Dorsolateral prefrontal cortex (tissue), 120 donors: ENCODE measurements at regions of chr14 and their contacts with region 1.

Region 1: DNA sequence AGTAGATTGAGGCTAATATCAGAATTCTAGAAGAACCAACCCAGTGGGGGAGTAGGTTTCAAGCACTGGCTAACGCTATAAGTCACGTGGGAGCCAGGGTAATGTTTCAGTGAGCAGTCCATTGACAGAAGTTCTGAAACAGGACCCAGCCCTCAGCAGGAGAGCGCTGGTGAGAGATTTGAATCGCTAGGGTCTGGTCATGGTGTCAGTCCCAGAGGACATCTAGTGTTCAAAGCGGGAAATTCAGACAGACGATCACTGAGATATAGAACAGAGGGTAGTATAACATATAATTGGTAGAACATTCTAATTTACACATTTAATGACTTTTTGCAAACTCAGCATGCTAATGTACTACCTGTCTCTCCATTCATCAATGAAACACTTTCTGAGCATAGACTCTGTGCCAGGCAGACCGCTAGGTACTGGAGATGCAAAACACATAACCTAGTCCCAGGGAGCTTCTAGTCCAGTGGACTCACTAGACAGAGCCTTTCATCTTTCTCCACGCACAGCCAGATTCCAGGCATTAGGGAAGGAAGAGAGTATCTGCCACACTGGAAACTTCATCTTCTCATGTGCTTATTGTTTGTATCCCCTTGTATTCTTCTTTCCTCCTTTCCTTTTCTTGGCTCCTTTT is 35.4 kb upstream of the RNASE3 start:
- DNase-seq: peak in 9 of 10 donors; percentile 17 to 76 (median 58)
- H3K4me3 ChIP-seq: no peak overlapping the region
- H3K27ac ChIP-seq: peak overlapping the region in 2 of 59 donors; percentile 36 to 45
- H3K27me3 ChIP-seq: peaks cover 0 to 14% (median 0%) of the 10 kb centered on the region in 45 donors
- CTCF ChIP-seq: peak; percentile 65 to 97 (median 89)

Region 2: DNA sequence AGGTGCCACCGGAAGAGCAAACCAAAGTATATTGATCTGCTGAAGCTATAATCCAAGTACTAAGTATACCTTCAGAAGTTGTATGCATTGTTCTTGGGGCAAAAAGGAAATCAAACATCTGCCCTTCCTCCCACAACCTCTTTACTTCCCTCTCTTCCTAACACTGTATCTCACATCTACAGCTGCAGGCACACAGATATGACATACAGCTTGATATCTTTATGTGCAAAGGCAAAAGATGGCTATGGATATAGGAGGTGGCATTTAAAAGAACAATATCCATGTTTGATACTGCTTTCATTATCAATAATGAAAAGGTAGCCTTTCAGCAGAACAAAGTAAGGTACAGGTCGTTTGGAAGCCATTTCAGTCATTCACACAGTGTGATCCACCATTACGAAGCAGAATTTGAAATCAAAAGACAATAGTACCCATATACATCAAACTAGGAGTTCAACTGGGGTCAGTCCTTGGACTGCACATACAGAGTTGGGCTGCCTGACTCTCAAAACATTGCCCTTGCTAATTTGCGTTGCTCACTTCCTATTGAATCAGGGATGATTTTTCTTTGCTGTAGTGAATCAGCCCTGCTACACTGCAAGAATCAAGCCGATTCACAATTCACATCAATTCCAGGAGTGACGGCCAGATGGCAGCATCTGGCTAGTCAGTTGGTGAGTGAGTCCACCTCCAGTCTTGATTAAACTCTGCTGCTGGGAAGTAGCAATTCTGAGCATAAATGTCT is 158.3 kb before region 1 on chr14:
- intact Hi-C with region 1: loop called (anchors 1 to 2 kb)
- DNase-seq: peak in 9 of 10 donors; percentile 55 to 86 (median 74)
- H3K4me3 ChIP-seq: peak overlapping the region in 1 of 59 donors; percentile 16
- H3K27ac ChIP-seq: peak overlapping the region in 8 of 59 donors; percentile 5 to 57 (median 26)
- H3K27me3 ChIP-seq: no peaks in the 10 kb centered on the region
- CTCF ChIP-seq: peak; percentile 66 to 97 (median 87)

Region 3: DNA sequence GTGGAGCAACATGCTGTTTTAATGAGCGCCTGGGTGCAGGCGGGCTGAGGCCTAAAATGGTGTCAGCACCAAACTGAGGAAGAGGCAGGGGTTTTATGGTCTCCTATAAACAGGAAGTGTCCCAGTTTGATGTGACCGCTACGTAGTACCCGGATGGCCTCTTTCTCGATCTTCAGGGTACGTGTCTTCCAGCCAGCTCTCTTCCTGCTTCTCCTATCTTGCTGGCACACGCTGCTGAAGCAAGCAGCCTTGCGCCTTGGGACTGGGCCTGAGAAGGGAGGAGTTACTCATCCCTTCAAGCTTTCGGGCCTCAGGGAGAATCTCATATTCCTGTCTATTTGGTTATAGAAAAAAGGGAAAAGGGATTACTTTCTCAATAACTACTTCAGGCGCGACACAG is 24.9 kb before region 1 on chr14:
- intact Hi-C with region 1: no loop called
- DNase-seq: no peak
- H3K4me3 ChIP-seq: no peak overlapping the region
- H3K27ac ChIP-seq: no peak overlapping the region
- H3K27me3 ChIP-seq: peaks cover 0 to 6% (median 0%) of the 10 kb centered on the region in 45 donors
- CTCF ChIP-seq: no peak

Region 4: DNA sequence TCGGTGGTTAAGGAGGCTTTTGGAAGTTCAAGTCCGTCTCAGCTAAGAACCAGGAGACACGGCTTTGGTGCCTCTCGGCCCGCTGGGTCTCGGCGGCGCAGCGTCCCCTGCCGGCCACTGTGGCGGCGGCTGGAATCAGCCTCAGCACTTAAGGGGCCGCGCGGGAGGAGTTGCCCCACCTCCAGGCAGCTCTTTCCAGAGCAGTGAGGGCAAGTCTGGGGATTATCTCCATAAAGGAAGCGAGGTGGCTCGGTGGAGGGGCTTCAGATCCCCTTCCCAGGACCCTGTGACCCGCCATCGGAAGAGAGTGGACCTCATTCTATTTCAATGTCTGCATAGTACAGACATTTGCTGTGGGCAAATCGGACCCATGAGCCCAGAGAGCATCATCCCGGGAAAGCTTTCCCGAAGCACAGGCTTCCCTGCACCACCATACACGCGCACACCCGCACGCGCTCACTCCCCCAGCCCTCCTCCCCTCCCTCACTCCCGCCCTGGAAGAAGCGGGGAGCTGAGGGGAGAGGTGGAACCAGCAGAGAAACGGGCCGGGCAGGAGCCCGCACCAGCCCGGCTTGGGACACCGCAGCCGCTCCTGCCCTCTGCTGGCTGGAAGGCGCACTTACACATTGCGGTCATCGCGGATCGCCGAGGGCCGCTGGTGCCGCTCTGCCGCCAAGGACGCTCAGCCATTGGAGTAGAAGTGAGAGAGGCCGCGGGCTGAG is 115.4 kb after region 1 on chr14:
- intact Hi-C with region 1: loop called (anchors 5 kb)
- DNase-seq: peak; percentile 66 to 89 (median 76)
- H3K4me3 ChIP-seq: peak overlapping the region; percentile 54 to 97 (median 70)
- H3K27ac ChIP-seq: peak overlapping the region in 55 of 59 donors; percentile 10 to 88 (median 68)
- H3K27me3 ChIP-seq: peaks cover 0 to 20% (median 0%) of the 10 kb centered on the region in 45 donors
- CTCF ChIP-seq: peak; percentile 52 to 88 (median 78)

Region 5: GRCh38 chr14:20982646-20983369 is 127.0 kb after region 1 on chr14:
- intact Hi-C with region 1: no loop called
- DNase-seq: no peak
- H3K4me3 ChIP-seq: no peak overlapping the region
- H3K27ac ChIP-seq: no peak overlapping the region
- H3K27me3 ChIP-seq: peaks cover 0 to 6% (median 0%) of the 10 kb centered on the region in 45 donors
- CTCF ChIP-seq: no peak

Region 6: GRCh38 chr14:21092273-21093011 is 236.7 kb after region 1 on chr14:
- intact Hi-C with region 1: loop called in 1 of 2 experiments (anchors 5 kb)
- DNase-seq: peak; percentile 65 to 83 (median 75)
- H3K4me3 ChIP-seq: peak overlapping the region in 19 of 59 donors; percentile 0 to 36 (median 17)
- H3K27ac ChIP-seq: peak overlapping the region in 41 of 59 donors; percentile 2 to 81 (median 34)
- H3K27me3 ChIP-seq: no peaks in the 10 kb centered on the region
- CTCF ChIP-seq: peak; percentile 65 to 100 (median 100)